Activated T-helper 1 cell treated with anti-CD3 and anti-CD28 coated beads, Interleukin-12 subunit alpha, Interleukin-12 subunit beta, Interleukin-2, Interleukin-4 antibody, amounts not matched to agents 30 ng/mL and 10 ng/mL and 1 ng/mL, durations not matched to agents 14 hours and 24 hours and 36 hours (primary cell): ENCODE measurements at regions of chr9 and their contacts with region 1.

Region 1: GRCh38 chr9:32968101-32969011 is 33.1 kb downstream of the APTX start:
- DNase-seq: peak; percentile 21
- H3K4me3 Mint-ChIP-seq: no peak overlapping the region
- H3K27ac Mint-ChIP-seq: no peak overlapping the region
- H3K4me1 Mint-ChIP-seq: no peaks in the 10 kb centered on the region
- H3K27me3 Mint-ChIP-seq: no peaks in the 10 kb centered on the region

Region 2: DNA sequence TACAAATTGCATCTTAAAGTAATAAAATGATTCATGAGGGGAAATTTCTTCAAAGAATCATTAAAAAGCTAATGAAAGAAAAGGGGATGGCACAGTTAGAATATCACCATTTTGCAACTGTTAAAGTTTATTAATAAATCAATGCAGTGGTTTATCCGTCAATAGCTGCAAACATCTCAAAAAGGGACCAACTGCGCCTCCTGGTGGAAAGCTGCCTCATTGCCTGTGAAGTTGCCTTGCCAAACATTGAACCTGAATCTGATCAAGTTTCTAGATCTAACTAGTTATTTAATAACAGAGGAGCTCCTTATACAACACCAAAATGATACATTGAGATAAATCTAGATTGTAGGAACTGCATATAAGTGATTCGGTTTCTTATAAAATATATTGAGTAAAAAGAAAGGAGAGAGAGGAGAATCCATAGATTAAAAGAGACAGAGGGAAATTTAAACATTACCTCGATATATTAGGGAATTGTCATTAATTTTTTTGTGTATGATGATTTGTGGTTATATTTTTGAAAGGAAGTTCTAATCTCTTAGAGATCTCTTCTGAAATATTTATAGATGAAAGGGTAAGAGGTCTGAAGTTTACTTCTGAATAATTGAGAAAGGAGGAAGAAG is 388.5 kb before region 1 on chr9:
- intact Hi-C with region 1: loop called (anchors 1 kb)
- DNase-seq: peak; percentile 53
- H3K4me3 Mint-ChIP-seq: no peak overlapping the region
- H3K27ac Mint-ChIP-seq: no peak overlapping the region
- H3K4me1 Mint-ChIP-seq: no peaks in the 10 kb centered on the region
- H3K27me3 Mint-ChIP-seq: peaks cover 29% of the 10 kb centered on the region

Region 3: GRCh38 chr9:32589083-32589723 is 379.2 kb before region 1 on chr9:
- intact Hi-C with region 1: loop called (anchors 1 kb)
- DNase-seq: no peak
- H3K4me3 Mint-ChIP-seq: no peak overlapping the region
- H3K27ac Mint-ChIP-seq: no peak overlapping the region
- H3K4me1 Mint-ChIP-seq: no peaks in the 10 kb centered on the region
- H3K27me3 Mint-ChIP-seq: peaks cover 14% of the 10 kb centered on the region